HCT116 (cell line): ENCODE measurements at regions of chr12 and their contacts with region 1.

Region 1: DNA sequence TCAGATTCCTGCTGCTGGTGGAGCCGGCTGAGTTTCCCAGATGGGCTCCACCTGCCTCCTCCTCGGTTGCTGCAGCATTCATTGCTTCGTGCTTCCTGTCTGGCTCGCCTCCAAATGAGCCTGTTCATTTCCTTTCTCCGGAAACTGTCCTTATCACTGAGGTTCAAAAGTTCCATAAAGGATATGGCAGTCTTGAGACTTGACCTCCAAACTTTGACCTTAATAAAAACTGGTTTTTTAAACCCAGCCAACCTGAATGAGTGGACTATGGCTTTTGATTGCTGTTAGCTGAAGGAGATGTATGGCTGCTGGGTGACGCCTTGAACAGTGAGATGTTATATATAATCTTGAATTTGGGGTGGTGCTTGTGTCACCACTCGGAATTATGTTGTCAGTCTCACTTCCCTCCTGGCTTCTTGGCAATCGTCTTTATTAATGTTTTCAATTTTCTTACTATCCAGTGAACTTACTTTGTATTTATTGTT is 62.7 kb downstream of the RASSF3 start:
- DNase-seq: peak; percentile 56
- ATAC-seq: peak; percentile 47
- H3K4me3 ChIP-seq: peak overlapping the region; percentile 22 to 39
- H3K27ac ChIP-seq: peak overlapping the region; percentile 80
- H3K4me1 ChIP-seq: peaks cover 85 to 94% of the 10 kb centered on the region in 2 experiments
- H3K27me3 ChIP-seq: no peaks in the 10 kb centered on the region
- CTCF ChIP-seq: no peak
- POLR2A ChIP-seq: no peak
- RAD21 ChIP-seq: no peak

Region 2: GRCh38 chr12:64625243-64626077 is 47.5 kb before region 1 on chr12:
- CTCF ChIA-PET with region 1: no interaction called
- POLR2A ChIA-PET with region 1: no interaction called
- RAD21 ChIA-PET with region 1: no interaction called
- intact Hi-C with region 1: loop called (anchors 5 kb)
- DNase-seq: peak; percentile 60
- ATAC-seq: peak; percentile 84
- H3K4me3 ChIP-seq: peak overlapping the region; percentile 36 to 49
- H3K27ac ChIP-seq: peak overlapping the region; percentile 85
- H3K4me1 ChIP-seq: peaks cover 25 to 35% of the 10 kb centered on the region in 2 experiments
- H3K27me3 ChIP-seq: no peaks in the 10 kb centered on the region
- CTCF ChIP-seq: no peak
- POLR2A ChIP-seq: no peak
- RAD21 ChIP-seq: peak; percentile 14; the same call in 1 of the 2 replicates